HepG2 (cell line): ENCODE measurements at regions of chr10 and their contacts with region 1.

Region 1: DNA sequence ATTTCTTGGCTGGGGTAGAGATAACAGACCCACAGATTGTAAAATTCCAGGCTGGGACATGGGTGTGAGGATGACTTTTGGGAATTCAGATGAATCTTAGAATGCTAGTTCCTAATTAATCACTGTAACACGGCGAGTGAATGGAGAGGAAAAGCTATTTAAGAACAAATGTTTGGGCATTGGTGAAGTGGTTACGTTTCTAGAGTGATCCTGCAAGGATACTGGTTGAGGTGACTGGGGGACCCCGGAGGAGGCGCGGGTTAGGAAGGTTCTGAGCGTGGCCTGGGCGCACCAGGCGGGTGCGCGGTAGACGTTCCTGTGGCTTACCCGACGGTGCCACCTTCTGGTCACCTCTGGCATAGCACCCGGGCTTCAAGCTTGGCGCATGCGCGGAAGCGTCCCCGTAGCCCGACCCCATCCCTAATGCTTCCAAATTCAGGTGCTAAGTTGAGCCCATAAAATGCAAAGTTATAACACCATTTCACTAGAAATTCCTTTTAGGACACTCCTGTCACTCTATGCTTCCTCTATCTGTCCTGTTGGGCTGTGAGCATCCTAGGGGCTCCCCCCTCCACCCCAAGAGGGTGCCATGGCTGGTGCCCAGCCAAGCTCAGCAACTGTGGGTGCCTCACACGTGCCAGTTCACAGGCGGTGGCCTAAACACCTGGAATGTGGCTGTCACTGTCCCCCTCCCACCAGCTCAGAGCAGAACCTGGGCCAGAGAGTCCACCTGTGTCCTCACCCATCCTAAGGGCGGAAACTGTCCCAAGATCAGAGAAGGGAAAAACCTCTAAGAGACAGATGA is 104.5 kb downstream of the PTPRE start:
- DNase-seq: peak; percentile 43
- ATAC-seq: peak; percentile 90
- H3K4me3 ChIP-seq: no peak overlapping the region
- H3K27ac ChIP-seq: no peak overlapping the region
- H3K4me1 ChIP-seq: no peaks in the 10 kb centered on the region
- H3K27me3 ChIP-seq: peaks cover 0 to 43% of the 10 kb centered on the region in 2 experiments
- CTCF ChIP-seq: peak; percentile 94
- EP300 ChIP-seq: no peak
- POLR2A ChIP-seq: no peak
- RAD21 ChIP-seq: peak; percentile 87

Region 2: DNA sequence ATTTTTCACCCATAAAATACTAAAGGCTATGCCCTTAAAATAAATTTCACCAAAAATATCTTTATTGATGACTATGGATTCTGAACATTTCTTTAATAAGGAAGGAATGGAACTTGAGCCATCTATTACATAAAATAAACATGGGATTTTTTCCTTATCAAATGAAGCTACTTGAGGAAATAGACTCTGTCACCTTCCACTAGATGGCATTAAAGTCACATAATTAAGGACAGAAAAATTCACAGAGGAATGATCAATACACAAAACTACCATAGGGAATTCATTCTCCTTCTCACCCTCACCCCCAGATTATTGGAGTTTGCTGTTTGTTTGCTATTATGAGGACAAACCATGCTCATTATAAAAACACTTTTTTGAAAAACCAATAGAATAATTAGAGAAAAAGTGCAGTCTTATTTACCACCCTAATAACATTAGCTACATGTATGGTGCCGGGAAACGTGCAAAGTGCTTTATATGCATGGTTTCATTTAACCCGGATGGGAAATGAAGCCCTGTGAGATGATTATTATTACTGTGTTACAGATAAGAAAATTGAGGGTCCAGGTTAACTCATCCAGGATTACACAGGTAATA is 295.5 kb before region 1 on chr10:
- CTCF ChIA-PET with region 1: no interaction called
- POLR2A ChIA-PET with region 1: no interaction called
- in situ Hi-C with region 1: loop called (anchors 25 kb)
- intact Hi-C with region 1: no loop called
- DNase-seq: peak; percentile 39
- ATAC-seq: no peak
- H3K4me3 ChIP-seq: no peak overlapping the region
- H3K27ac ChIP-seq: no peak overlapping the region
- H3K4me1 ChIP-seq: no peaks in the 10 kb centered on the region
- H3K27me3 ChIP-seq: peaks cover 0 to 3% of the 10 kb centered on the region in 2 experiments; a peak in 2 of 5 replicates
- CTCF ChIP-seq: peak; percentile 48
- EP300 ChIP-seq: no peak
- POLR2A ChIP-seq: no peak
- RAD21 ChIP-seq: no peak

Region 3: GRCh38 chr10:127872871-127873600 is 138.3 kb before region 1 on chr10:
- CTCF ChIA-PET with region 1: interaction called, 4 read pairs
- POLR2A ChIA-PET with region 1: no interaction called
- in situ Hi-C with region 1: no loop called
- intact Hi-C with region 1: loop called (anchors 10 kb)
- DNase-seq: peak; percentile 49
- ATAC-seq: peak; percentile 89
- H3K4me3 ChIP-seq: no peak overlapping the region
- H3K27ac ChIP-seq: no peak overlapping the region
- H3K4me1 ChIP-seq: peaks cover 9% of the 10 kb centered on the region
- H3K27me3 ChIP-seq: no peaks in the 10 kb centered on the region
- CTCF ChIP-seq: peak; percentile 65
- EP300 ChIP-seq: no peak
- POLR2A ChIP-seq: no peak
- RAD21 ChIP-seq: peak; percentile 32; the same call in 1 of the 2 replicates

Region 4: DNA sequence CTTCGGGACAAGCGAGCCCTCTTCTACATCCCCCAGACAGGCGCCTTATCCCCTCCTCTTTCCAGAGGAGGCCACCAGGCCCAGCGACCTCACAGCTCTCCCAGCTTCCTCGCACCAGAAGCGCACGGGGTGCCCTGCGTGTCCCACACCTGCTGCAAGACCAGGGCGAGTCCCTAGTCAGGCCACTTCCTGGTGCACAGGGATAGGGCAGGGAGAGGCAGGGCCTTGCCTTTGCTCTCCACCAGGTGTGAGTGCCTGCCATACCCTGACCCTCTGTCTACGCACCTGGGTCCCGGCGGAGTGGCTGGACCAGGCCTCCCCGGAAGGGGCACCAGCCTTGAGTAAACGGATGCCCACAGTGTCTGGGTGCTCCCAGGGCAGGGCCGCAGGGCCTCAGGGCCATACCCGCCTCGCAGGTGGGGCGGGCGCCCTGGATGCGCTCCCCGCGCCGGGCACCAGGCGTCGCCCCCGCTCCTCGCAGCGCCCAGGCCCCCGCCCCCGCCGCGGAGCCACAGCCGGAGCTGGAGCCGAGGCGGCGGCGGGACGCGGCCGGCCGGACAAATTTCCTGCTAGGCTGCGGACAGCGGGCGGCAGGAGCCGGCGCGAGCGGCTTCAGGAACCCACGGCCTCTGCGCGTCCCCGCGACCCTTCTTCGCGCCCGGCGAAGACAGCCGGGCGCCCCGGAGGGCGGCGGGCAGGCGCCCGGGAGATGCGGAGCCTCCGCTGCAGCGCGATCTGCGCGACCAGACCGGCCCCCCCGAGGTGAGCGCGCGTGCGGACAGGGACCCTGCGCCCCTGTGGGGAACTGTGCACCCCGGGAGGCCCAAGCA is 104.6 kb before region 1 on chr10 and contains the start of gene PTPRE:
- CTCF ChIA-PET with region 1: interaction called, 14 read pairs
- POLR2A ChIA-PET with region 1: no interaction called
- in situ Hi-C with region 1: loop called (anchors 5 kb)
- intact Hi-C with region 1: no loop called
- DNase-seq: no peak
- ATAC-seq: peak; percentile 98
- H3K4me3 ChIP-seq: peak within 1 kb of the TSS; percentile 40 to 63 (median 42); a peak in 5 of 6 replicates
- H3K27ac ChIP-seq: no peak within 1 kb of the TSS
- H3K4me1 ChIP-seq: no peaks in the 10 kb centered on the region
- H3K27me3 ChIP-seq: peaks cover 1 to 53% of the 10 kb centered on the region in 2 experiments; a peak in 3 of 5 replicates
- CTCF ChIP-seq: peak; percentile 60
- EP300 ChIP-seq: no peak
- POLR2A ChIP-seq: no peak
- RAD21 ChIP-seq: peak; percentile 88
- total RNA-seq, gene PTPRE: 0.02 TPM in 1 of 2 replicates, not detected in the other